PC-9 (cell line): ENCODE measurements at regions of chr4 and their contacts with region 1.

Region 1: GRCh38 chr4:128168701-128169100 is 107.6 kb downstream of the LARP1B start:
- DNase-seq: no peak
- H3K4me3 ChIP-seq: no peak overlapping the region
- H3K27ac ChIP-seq: no peak overlapping the region
- H3K4me1 ChIP-seq: peaks cover 8% of the 10 kb centered on the region; the same call in 1 of the 2 replicates
- H3K27me3 ChIP-seq: no peaks in the 10 kb centered on the region
- CTCF ChIP-seq: no peak

Region 2: DNA sequence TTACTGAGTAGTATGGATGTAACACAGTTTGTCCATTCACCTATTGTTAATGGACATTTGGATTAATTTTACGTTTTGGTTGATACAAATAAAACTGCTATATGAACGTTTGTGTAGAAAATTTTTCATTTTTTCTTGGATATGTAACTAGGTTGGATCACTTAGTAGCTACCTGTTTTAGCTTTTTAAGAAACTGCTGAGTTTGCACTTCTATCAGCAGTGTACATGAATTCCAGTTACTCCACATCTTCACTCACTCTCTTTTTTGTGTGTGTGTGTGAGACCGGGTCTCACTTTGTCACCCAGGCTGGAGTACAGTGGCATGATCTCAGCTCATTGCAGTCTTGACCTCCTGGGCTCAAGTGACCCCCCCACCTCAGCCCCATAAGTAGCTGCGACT is 92.2 kb before region 1 on chr4:
- CTCF ChIA-PET with region 1: interaction called, 3 read pairs
- POLR2A ChIA-PET with region 1: interaction called, 10 read pairs
- intact Hi-C with region 1: no loop called
- DNase-seq: no peak
- H3K4me3 ChIP-seq: no peak overlapping the region
- H3K27ac ChIP-seq: no peak overlapping the region
- H3K4me1 ChIP-seq: no peaks in the 10 kb centered on the region
- H3K27me3 ChIP-seq: no peaks in the 10 kb centered on the region
- CTCF ChIP-seq: no peak

Region 3: DNA sequence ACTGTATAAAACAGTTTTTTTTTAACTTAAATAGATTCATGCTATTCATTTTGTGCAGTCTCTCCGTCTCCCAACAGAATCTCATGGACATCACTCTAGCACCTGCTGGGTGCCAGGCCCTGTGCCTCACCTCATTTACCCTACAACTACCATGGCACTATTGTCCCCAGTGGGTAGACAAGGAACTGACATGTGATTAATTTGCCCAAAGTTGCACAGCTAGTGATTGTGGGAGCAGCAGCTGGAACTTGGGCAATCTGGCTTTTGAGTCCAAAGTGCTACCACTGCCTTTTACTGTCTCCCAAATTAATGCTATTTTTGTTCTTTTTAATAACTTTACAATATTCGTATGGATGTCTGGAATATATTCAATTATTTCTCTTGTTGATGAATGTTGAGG is 130.2 kb after region 1 on chr4:
- CTCF ChIA-PET with region 1: no interaction called
- POLR2A ChIA-PET with region 1: no interaction called
- intact Hi-C with region 1: no loop called
- DNase-seq: no peak
- H3K4me3 ChIP-seq: no peak overlapping the region
- H3K27ac ChIP-seq: no peak overlapping the region
- H3K4me1 ChIP-seq: no peaks in the 10 kb centered on the region
- H3K27me3 ChIP-seq: no peaks in the 10 kb centered on the region
- CTCF ChIP-seq: no peak